Naive thymus-derived CD4-positive, alpha-beta T cell (primary cell): ENCODE measurements at regions of chr19 and their contacts with region 1.

Region 1: DNA sequence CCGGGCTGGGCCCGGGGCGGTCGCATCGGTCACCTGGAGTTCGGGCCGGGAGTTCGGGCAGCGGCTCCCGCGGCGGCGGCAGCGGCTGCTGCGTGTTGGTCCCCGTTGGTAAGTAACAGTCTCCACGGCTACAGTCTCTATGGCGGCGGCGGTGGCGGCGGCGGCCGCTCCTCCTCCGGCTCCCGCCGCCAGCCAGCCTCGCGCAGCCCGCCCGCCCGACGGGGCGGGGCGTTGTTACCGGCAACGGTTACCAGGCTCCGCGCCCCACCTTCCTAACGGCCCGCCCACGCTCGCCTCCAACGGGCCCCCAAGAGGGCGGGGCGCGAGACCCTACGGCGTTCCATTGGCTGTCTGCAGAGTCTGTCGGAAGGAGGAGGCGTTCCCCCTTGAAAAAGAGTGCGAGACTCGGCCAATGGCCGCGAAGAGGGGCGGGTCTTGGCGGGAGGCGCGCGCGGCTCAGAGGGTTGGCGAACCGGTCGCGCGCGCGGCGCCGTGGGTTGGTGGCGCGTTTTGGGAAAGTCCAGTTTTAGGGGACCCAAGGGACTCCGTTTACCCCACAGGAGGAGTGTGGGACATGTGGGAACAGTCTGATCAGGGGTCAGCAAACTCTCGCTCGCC is at the start of gene RFX2:
- DNase-seq: peak; percentile 97 to 100 (median 99)
- ATAC-seq: peak; percentile 99
- H3K4me3 ChIP-seq: peak within 1 kb of the TSS; percentile 60
- H3K4me3 Mint-ChIP-seq: peak within 1 kb of the TSS; percentile 84 to 98 (median 92)
- H3K27ac ChIP-seq: peak within 1 kb of the TSS; percentile 64
- H3K27ac Mint-ChIP-seq: peak within 1 kb of the TSS; percentile 71 to 92 (median 88)
- H3K4me1 ChIP-seq: peaks cover 8 to 10% of the 10 kb centered on the region in 2 donors
- H3K4me1 Mint-ChIP-seq: peaks cover 21 to 27% (median 25%) of the 10 kb centered on the region in 7 donors
- H3K27me3 ChIP-seq: peaks cover 0 to 4% of the 10 kb centered on the region in 2 donors
- H3K27me3 Mint-ChIP-seq: peaks cover 0 to 19% (median 4%) of the 10 kb centered on the region in 5 donors
- total RNA-seq, gene RFX2: 4.0 to 18.4 (median 8.4) TPM

Region 2: GRCh38 chr19:5690125-5690954 is 420.1 kb before region 1 on chr19 and contains the start of gene RPL36:
- CTCF ChIA-PET with region 1: no interaction called
- POLR2A ChIA-PET with region 1: no interaction called
- intact Hi-C with region 1: loop called in 1 of 2 experiments (anchors 10 kb)
- DNase-seq: peak; percentile 95 to 100 (median 99)
- ATAC-seq: peak; percentile 77
- H3K4me3 ChIP-seq: peak within 1 kb of the TSS; percentile 90
- H3K4me3 Mint-ChIP-seq: peak within 1 kb of the TSS; percentile 90 to 98 (median 94)
- H3K27ac ChIP-seq: peak within 1 kb of the TSS; percentile 85
- H3K27ac Mint-ChIP-seq: peak within 1 kb of the TSS; percentile 89 to 97 (median 93)
- H3K4me1 ChIP-seq: peaks cover 12 to 21% of the 10 kb centered on the region in 2 donors
- H3K4me1 Mint-ChIP-seq: peaks cover 5 to 39% (median 33%) of the 10 kb centered on the region in 7 donors
- H3K27me3 ChIP-seq: no peaks in the 10 kb centered on the region
- H3K27me3 Mint-ChIP-seq: no peaks in the 10 kb centered on the region
- total RNA-seq, gene RPL36: 865 to 1,786 (median 1,037) TPM

Region 3: GRCh38 chr19:5827891-5828660 is 282.4 kb before region 1 on chr19:
- CTCF ChIA-PET with region 1: no interaction called
- POLR2A ChIA-PET with region 1: no interaction called
- intact Hi-C with region 1: loop called in 1 of 2 experiments (anchors 1 kb)
- DNase-seq: peak; percentile 91 to 98 (median 94)
- ATAC-seq: peak; percentile 90
- H3K4me3 ChIP-seq: peak overlapping the region; percentile 76
- H3K4me3 Mint-ChIP-seq: peak overlapping the region; percentile 91 to 100 (median 97)
- H3K27ac ChIP-seq: peak overlapping the region; percentile 80
- H3K27ac Mint-ChIP-seq: peak overlapping the region; percentile 94 to 100 (median 97)
- H3K4me1 ChIP-seq: peaks cover 10 to 17% of the 10 kb centered on the region in 2 donors
- H3K4me1 Mint-ChIP-seq: peaks cover 5 to 19% (median 10%) of the 10 kb centered on the region in 7 donors
- H3K27me3 ChIP-seq: no peaks in the 10 kb centered on the region
- H3K27me3 Mint-ChIP-seq: peaks cover 0 to 6% (median 0%) of the 10 kb centered on the region in 5 donors

Region 4: GRCh38 chr19:6066661-6067646 is 43.5 kb before region 1 on chr19:
- CTCF ChIA-PET with region 1: no interaction called
- POLR2A ChIA-PET with region 1: no interaction called
- intact Hi-C with region 1: loop called in 1 of 2 experiments (anchors 5 kb)
- DNase-seq: no peak
- ATAC-seq: peak; percentile 43
- H3K4me3 ChIP-seq: no peak overlapping the region
- H3K4me3 Mint-ChIP-seq: no peak overlapping the region
- H3K27ac ChIP-seq: no peak overlapping the region
- H3K27ac Mint-ChIP-seq: peak overlapping the region in 2 of 9 donors; percentile 16 to 63
- H3K4me1 ChIP-seq: peaks cover 0 to 4% of the 10 kb centered on the region in 2 donors
- H3K4me1 Mint-ChIP-seq: peaks cover 15 to 34% (median 29%) of the 10 kb centered on the region in 7 donors
- H3K27me3 ChIP-seq: no peaks in the 10 kb centered on the region
- H3K27me3 Mint-ChIP-seq: peaks cover 0 to 11% (median 6%) of the 10 kb centered on the region in 5 donors

Region 5: DNA sequence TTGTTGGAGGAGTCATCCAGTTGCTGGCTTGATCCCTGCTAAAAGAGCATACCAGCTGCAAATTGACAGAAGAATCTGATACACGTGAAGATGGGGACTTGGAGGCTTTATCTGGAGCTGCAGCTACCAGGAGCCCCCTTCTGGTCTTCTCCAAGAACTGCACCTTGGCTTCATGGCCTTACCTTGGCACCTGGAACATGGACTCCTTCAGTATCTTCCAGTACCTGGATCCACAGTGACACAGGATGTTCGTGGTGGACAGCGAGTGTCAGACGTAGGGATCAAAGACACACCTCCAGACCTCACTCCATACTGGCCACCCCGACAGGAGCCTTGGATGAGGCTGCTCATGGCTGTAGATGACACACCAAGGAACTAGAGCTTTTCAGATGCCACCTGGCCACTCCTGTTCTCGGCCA is 15.1 kb after region 1 on chr19:
- CTCF ChIA-PET with region 1: interaction called, 14 read pairs
- POLR2A ChIA-PET with region 1: no interaction called
- intact Hi-C with region 1: loop called in 1 of 2 experiments (anchors 1 kb)
- DNase-seq: peak; percentile 25 to 78 (median 70)
- ATAC-seq: peak; percentile 89
- H3K4me3 ChIP-seq: no peak overlapping the region
- H3K4me3 Mint-ChIP-seq: no peak overlapping the region
- H3K27ac ChIP-seq: no peak overlapping the region
- H3K27ac Mint-ChIP-seq: peak overlapping the region in 1 of 9 donors; percentile 28
- H3K4me1 ChIP-seq: no peaks in the 10 kb centered on the region
- H3K4me1 Mint-ChIP-seq: peaks cover 0 to 7% (median 0%) of the 10 kb centered on the region in 7 donors
- H3K27me3 ChIP-seq: no peaks in the 10 kb centered on the region
- H3K27me3 Mint-ChIP-seq: no peaks in the 10 kb centered on the region

Region 6: DNA sequence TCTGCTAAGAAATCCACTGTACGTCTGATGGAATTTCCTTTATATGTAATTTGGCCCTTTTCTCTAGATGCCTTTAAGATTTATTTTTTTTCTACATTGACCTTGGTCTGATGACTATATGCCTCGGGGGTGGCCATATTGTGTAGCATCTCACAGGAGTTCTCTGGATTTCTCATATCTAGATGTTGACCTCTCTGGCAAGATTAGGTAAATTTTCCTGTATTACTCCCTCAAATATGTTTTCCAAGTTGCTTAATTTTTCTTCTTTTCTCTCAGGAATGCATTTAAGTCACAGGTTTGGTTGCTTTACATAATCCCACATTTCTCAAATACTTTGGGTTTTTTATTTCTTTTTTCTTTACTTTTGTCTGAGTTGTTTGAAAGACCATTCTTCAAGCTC is 61.1 kb after region 1 on chr19:
- CTCF ChIA-PET with region 1: no interaction called
- POLR2A ChIA-PET with region 1: no interaction called
- intact Hi-C with region 1: no loop called
- DNase-seq: no peak
- ATAC-seq: no peak
- H3K4me3 ChIP-seq: no peak overlapping the region
- H3K4me3 Mint-ChIP-seq: no peak overlapping the region
- H3K27ac ChIP-seq: no peak overlapping the region
- H3K27ac Mint-ChIP-seq: no peak overlapping the region
- H3K4me1 ChIP-seq: no peaks in the 10 kb centered on the region
- H3K4me1 Mint-ChIP-seq: peaks cover 0 to 3% (median 0%) of the 10 kb centered on the region in 7 donors
- H3K27me3 ChIP-seq: no peaks in the 10 kb centered on the region
- H3K27me3 Mint-ChIP-seq: peaks cover 0 to 33% (median 17%) of the 10 kb centered on the region in 5 donors

Region 7: DNA sequence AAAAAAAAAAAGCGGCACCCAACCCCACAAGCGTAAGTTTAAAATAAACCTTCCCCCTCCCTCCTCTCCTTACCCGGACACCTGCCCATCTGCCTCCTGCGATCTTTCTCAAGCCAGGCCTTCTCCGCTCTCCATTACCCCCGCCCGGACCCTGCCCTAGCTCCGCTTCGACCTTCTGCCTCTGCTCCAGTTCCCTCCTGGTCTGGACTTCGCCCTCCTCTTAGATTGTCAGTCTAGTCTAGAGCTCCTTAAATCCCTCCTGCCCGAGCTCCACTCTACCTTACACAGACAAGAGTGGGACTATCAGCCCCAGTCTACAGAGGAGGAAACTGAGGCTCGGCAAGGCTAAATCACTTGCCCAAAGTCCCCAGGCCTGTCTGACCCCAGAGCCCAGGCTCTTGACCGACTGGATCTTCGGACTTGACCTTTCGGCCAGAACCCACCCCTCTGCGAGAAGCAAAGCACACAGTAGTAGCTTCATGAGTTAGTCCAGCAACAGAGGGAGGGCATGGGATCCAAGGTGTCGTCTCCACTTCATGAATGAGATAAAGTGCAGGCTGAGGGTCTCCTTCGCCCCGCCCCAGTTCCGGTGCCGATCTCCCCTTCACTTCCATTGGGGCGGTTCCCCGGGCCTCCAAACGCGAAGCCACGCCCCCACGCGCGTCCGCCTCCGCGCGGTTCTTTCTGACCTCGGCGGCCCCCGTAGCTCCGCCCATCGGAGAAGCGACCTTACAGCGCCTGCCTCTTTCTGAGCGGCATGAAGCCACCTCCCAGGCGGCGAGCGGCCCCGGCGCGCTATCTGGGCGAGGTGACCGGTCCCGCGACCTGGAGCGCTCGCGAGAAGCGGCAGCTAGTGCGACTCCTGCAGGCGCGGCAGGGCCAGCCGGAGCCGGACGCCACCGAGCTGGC is 1809.4 kb after region 1 on chr19 and contains the start of gene SNAPC2:
- CTCF ChIA-PET with region 1: no interaction called
- POLR2A ChIA-PET with region 1: no interaction called
- intact Hi-C with region 1: loop called (anchors 2 to 10 kb)
- DNase-seq: peak; percentile 95 to 99 (median 98)
- ATAC-seq: peak; percentile 71
- H3K4me3 ChIP-seq: peak within 1 kb of the TSS; percentile 86
- H3K4me3 Mint-ChIP-seq: peak within 1 kb of the TSS; percentile 88 to 97 (median 94)
- H3K27ac ChIP-seq: peak within 1 kb of the TSS; percentile 75
- H3K27ac Mint-ChIP-seq: peak within 1 kb of the TSS; percentile 76 to 97 (median 92)
- H3K4me1 ChIP-seq: peaks cover 25 to 34% of the 10 kb centered on the region in 2 donors
- H3K4me1 Mint-ChIP-seq: peaks cover 15 to 52% (median 38%) of the 10 kb centered on the region in 7 donors
- H3K27me3 ChIP-seq: peaks cover 3 to 20% of the 10 kb centered on the region in 2 donors
- H3K27me3 Mint-ChIP-seq: peaks cover 12 to 33% (median 14%) of the 10 kb centered on the region in 5 donors
- total RNA-seq, gene SNAPC2: 12.3 to 24.4 (median 21.4) TPM